PC-3 (cell line): ENCODE measurements at regions of chr3 and their contacts with region 1.

Region 1: GRCh38 chr3:11530153-11530721 is 113.5 kb downstream of the VGLL4 start:
- DNase-seq: no peak
- ATAC-seq: no peak
- H3K4me3 ChIP-seq: no peak overlapping the region
- H3K27ac ChIP-seq: no peak overlapping the region
- H3K4me1 ChIP-seq: no peaks in the 10 kb centered on the region
- H3K27me3 ChIP-seq: no peaks in the 10 kb centered on the region
- CTCF ChIP-seq: no peak

Region 2: GRCh38 chr3:11651900-11652299 is 121.7 kb after region 1 on chr3:
- CTCF ChIA-PET with region 1: interaction called, 14 read pairs
- POLR2A ChIA-PET with region 1: no interaction called
- intact Hi-C with region 1: no loop called
- DNase-seq: peak; percentile 70
- ATAC-seq: no peak
- H3K4me3 ChIP-seq: no peak overlapping the region
- H3K27ac ChIP-seq: no peak overlapping the region
- H3K4me1 ChIP-seq: no peaks in the 10 kb centered on the region
- H3K27me3 ChIP-seq: no peaks in the 10 kb centered on the region
- CTCF ChIP-seq: peak; percentile 66